ENCODE measurements at regions of chr17 and their contacts with region 1.

Region 1: GRCh38 chr17:49707608-49708514 is at the start of gene SLC35B1:
- H3K4me3 ChIP-seq: peak within 1 kb of the TSS; percentile 88
- H3K27ac ChIP-seq: peak within 1 kb of the TSS; percentile 93
- H3K4me1 ChIP-seq: no peaks in the 10 kb centered on the region
- CTCF ChIP-seq: peak; percentile 99

Region 2: DNA sequence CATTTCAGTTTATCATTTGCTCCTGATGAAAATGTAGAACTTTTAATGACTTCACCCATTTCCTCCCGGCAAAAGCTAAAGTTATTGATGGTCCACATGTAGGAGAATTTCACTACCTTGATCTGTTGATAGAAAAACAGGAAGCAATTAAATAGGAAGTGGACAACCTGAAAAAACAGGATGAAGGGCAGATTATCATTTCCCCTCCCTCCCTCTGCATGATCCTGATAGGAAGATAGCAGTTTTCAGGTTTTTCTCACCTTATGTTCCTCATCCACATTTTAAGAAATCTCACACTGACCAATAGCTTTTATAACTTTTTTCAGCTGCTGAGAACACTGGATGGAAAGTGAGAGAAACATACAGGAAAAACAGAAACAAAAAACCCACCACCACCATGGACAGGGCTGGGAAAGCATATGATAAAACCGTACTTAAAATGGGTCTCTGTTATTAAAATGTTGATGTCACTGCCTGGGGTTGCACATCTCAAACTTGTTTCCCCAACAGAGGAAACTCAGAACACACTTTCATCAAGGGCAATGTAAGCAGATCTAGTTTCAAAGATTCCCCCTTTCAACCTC is 85.8 kb before region 1 on chr17:
- CTCF ChIA-PET with region 1: no interaction called
- POLR2A ChIA-PET with region 1: no interaction called
- H3K4me3 ChIP-seq: no peak overlapping the region
- H3K27ac ChIP-seq: no peak overlapping the region
- H3K4me1 ChIP-seq: no peaks in the 10 kb centered on the region
- CTCF ChIP-seq: no peak

Region 3: GRCh38 chr17:49722066-49722465 is 14.2 kb after region 1 on chr17:
- CTCF ChIA-PET with region 1: interaction called, 16 read pairs
- POLR2A ChIA-PET with region 1: interaction called, 4 read pairs
- H3K4me3 ChIP-seq: no peak overlapping the region
- H3K27ac ChIP-seq: peak overlapping the region; percentile 16; the same call in 1 of the 2 replicates
- H3K4me1 ChIP-seq: no peaks in the 10 kb centered on the region
- CTCF ChIP-seq: no peak

Region 4: GRCh38 chr17:49730785-49731434 is 23.0 kb after region 1 on chr17:
- CTCF ChIA-PET with region 1: interaction called, 10 read pairs
- POLR2A ChIA-PET with region 1: no interaction called
- H3K4me3 ChIP-seq: no peak overlapping the region
- H3K27ac ChIP-seq: no peak overlapping the region
- H3K4me1 ChIP-seq: no peaks in the 10 kb centered on the region
- CTCF ChIP-seq: no peak